T-cell (primary cell): ENCODE measurements at regions of chr20 and their contacts with region 1.

Region 1: DNA sequence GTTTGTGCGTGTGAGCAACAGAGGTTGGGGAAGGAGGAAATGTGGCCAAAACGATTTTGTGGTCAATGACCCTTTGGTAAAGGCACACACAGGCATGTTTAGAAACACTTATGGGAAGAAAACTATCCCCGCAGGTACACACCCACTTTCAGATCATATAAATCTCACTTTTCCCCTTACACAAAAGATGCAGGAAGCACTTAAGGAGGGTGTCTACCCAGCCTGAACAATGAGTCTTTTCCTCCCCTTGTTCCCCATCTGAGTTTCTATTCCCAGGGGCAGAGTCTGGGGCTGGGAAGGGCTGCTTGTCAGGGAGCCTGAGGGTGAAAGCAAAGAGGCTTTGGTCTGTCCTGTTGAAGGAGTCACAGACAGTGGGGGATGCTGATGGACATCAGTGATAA is 193.2 kb upstream of the SALL4 start:
- DNase-seq: no peak
- ATAC-seq: no peak
- H3K4me3 ChIP-seq: no peak overlapping the region
- H3K4me3 Mint-ChIP-seq: no peak overlapping the region
- H3K27ac ChIP-seq: no peak overlapping the region
- H3K27ac Mint-ChIP-seq: no peak overlapping the region
- H3K4me1 ChIP-seq: no peaks in the 10 kb centered on the region
- H3K4me1 Mint-ChIP-seq: no peaks in the 10 kb centered on the region
- H3K27me3 ChIP-seq: no peaks in the 10 kb centered on the region
- H3K27me3 Mint-ChIP-seq: peaks cover 5 to 6% of the 10 kb centered on the region in 2 donors

Region 2: GRCh38 chr20:51980277-51980676 is 15.3 kb before region 1 on chr20:
- CTCF ChIA-PET with region 1: no interaction called
- POLR2A ChIA-PET with region 1: interaction called in 1 of 2 experiments, 10 read pairs
- DNase-seq: no peak
- ATAC-seq: no peak
- H3K4me3 ChIP-seq: no peak overlapping the region
- H3K4me3 Mint-ChIP-seq: no peak overlapping the region
- H3K27ac ChIP-seq: no peak overlapping the region
- H3K27ac Mint-ChIP-seq: no peak overlapping the region
- H3K4me1 ChIP-seq: no peaks in the 10 kb centered on the region
- H3K4me1 Mint-ChIP-seq: no peaks in the 10 kb centered on the region
- H3K27me3 ChIP-seq: no peaks in the 10 kb centered on the region
- H3K27me3 Mint-ChIP-seq: no peaks in the 10 kb centered on the region